Endothelial cell of umbilical vein (primary cell): ENCODE measurements at regions of chr3 and their contacts with region 1.

Region 1: GRCh38 chr3:134197681-134198261 is 52.9 kb downstream of the RYK start:
- DNase-seq: peak; percentile 72
- H3K4me3 ChIP-seq: no peak overlapping the region
- H3K27ac ChIP-seq: no peak overlapping the region
- H3K4me1 ChIP-seq: peaks cover 23% of the 10 kb centered on the region
- H3K27me3 ChIP-seq: no peaks in the 10 kb centered on the region
- CTCF ChIP-seq: peak; percentile 55 to 61
- POLR2A ChIP-seq: no peak

Region 2: GRCh38 chr3:134111616-134112015 is 86.2 kb before region 1 on chr3:
- CTCF ChIA-PET with region 1: no interaction called
- POLR2A ChIA-PET with region 1: no interaction called
- dilution Hi-C with region 1: no loop called
- intact Hi-C with region 1: no loop called
- DNase-seq: no peak
- H3K4me3 ChIP-seq: no peak overlapping the region
- H3K27ac ChIP-seq: no peak overlapping the region
- H3K4me1 ChIP-seq: peaks cover 3% of the 10 kb centered on the region
- H3K27me3 ChIP-seq: no peaks in the 10 kb centered on the region
- CTCF ChIP-seq: no peak
- POLR2A ChIP-seq: no peak

Region 3: DNA sequence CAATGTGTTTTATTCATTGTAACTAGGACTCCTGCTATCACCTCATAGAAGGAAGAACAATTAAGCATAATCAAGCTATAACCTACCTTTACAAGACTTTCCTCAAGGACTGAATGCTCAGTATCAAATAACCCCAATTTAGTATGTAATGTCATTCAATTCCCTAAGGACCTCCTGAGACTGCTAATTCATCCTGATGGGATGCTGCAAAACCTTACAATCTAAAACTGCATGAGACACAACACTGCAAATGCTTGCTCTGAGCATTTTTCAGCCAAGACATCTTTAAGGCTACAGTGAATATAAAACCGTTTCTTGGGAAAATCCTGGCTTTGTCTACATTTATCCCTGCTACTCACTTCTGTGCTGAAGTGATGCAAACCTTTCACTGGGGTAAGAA is 17.0 kb before region 1 on chr3:
- CTCF ChIA-PET with region 1: interaction called, 10 read pairs
- POLR2A ChIA-PET with region 1: no interaction called
- dilution Hi-C with region 1: no loop called
- intact Hi-C with region 1: no loop called
- DNase-seq: no peak
- H3K4me3 ChIP-seq: no peak overlapping the region
- H3K27ac ChIP-seq: no peak overlapping the region
- H3K4me1 ChIP-seq: no peaks in the 10 kb centered on the region
- H3K27me3 ChIP-seq: no peaks in the 10 kb centered on the region
- CTCF ChIP-seq: no peak
- POLR2A ChIP-seq: no peak